ENCODE measurements at regions of chr14 and their contacts with region 1.

Region 1: DNA sequence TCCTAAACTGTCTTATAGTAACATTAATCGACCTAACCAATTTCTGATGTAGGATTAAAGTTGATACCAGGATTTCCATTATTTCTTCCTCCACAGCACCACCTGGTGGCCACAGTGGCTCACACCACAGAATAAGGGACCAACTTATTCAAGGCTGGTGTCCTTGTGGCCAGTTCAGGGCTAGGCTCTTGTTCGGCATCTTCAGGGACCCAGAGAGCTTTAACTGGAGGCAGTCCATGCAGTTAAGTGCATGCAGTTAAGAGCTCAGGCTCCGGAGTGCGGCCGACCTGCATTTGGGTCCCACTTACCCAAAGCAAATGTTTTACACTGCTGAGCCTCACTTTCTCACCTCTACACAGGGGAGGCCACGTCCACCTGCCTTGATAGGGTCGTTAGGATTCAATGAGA is 42.0 kb upstream of the GPR68 start:
- DNase-seq: peak; percentile 90
- ATAC-seq: peak; percentile 85
- H3K4me3 Mint-ChIP-seq: no peak overlapping the region
- H3K27ac Mint-ChIP-seq: peak overlapping the region; percentile 82
- H3K4me1 Mint-ChIP-seq: peaks cover 15% of the 10 kb centered on the region
- H3K27me3 Mint-ChIP-seq: no peaks in the 10 kb centered on the region
- CTCF ChIP-seq: peak; percentile 96

Region 2: GRCh38 chr14:91193069-91193468 is 93.5 kb before region 1 on chr14:
- CTCF ChIA-PET with region 1: interaction called, 17 read pairs
- POLR2A ChIA-PET with region 1: no interaction called
- intact Hi-C with region 1: no loop called
- DNase-seq: no peak
- ATAC-seq: no peak
- H3K4me3 Mint-ChIP-seq: no peak overlapping the region
- H3K27ac Mint-ChIP-seq: no peak overlapping the region
- H3K4me1 Mint-ChIP-seq: peaks cover 24% of the 10 kb centered on the region
- H3K27me3 Mint-ChIP-seq: no peaks in the 10 kb centered on the region
- CTCF ChIP-seq: no peak

Region 3: DNA sequence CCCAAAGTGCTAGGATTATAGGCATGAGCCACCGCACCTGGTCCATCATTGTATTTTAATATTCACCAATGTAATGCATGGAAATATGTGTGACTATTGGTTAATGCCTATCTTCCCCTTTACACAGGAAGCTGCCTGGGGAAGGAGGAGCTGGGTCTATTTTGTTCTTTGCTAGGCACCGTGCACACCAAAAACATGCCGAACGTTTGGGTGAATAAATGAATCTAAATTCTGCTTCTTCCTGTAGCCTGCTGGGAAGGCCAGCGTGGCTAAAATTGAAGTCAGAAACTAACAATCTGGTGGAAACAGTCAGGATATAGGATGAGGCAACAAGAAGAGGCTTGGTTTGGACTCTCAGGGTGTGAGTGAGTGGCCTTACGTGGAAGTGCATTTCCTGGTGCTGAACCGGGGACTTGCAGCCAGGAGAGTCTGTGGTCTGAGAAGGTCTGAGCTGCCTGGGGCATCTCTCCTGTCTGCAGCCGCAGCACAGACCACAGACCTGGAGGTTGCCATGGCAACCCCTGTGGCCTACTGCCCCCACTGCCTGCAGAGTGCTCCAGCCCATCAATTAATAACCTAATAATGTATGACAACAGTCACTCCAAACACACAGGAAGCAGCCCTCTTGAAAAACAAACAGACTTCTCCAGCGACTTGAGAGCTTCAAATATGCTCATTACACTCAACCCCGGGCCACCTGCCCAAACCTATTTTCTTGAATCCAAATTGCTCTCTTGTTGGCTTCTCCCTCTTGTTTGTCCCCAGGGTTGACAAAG is 36.5 kb before region 1 on chr14:
- CTCF ChIA-PET with region 1: interaction called, 11 read pairs
- POLR2A ChIA-PET with region 1: interaction called, 3 read pairs
- intact Hi-C with region 1: no loop called
- DNase-seq: peak; percentile 70
- ATAC-seq: peak; percentile 11
- H3K4me3 Mint-ChIP-seq: peak overlapping the region; percentile 54
- H3K27ac Mint-ChIP-seq: peak overlapping the region; percentile 93
- H3K4me1 Mint-ChIP-seq: peaks cover 84% of the 10 kb centered on the region
- H3K27me3 Mint-ChIP-seq: peaks cover under 1% of the 10 kb centered on the region
- CTCF ChIP-seq: no peak

Region 4: GRCh38 chr14:91299121-91300115 is 12.9 kb after region 1 on chr14:
- CTCF ChIA-PET with region 1: interaction called, 10 read pairs
- POLR2A ChIA-PET with region 1: interaction called, 5 read pairs
- intact Hi-C with region 1: no loop called
- DNase-seq: peak; percentile 85
- ATAC-seq: peak; percentile 11
- H3K4me3 Mint-ChIP-seq: no peak overlapping the region
- H3K27ac Mint-ChIP-seq: peak overlapping the region; percentile 96
- H3K4me1 Mint-ChIP-seq: peaks cover 56% of the 10 kb centered on the region
- H3K27me3 Mint-ChIP-seq: no peaks in the 10 kb centered on the region
- CTCF ChIP-seq: no peak